Sigmoid colon (tissue), 7 donors: ENCODE measurements at regions of chr13 and their contacts with region 1.

Region 1: GRCh38 chr13:33204130-33204927 is 81.2 kb downstream of the STARD13 start:
- DNase-seq: peak; percentile 96
- H3K4me3 ChIP-seq: peak overlapping the region; percentile 36 to 58 (median 51)
- H3K27ac ChIP-seq: peak overlapping the region; percentile 83 to 88 (median 84)
- H3K4me1 ChIP-seq: peaks cover 0 to 82% (median 73%) of the 10 kb centered on the region in 4 donors
- H3K27me3 ChIP-seq: no peaks in the 10 kb centered on the region
- CTCF ChIP-seq: no peak
- EP300 ChIP-seq: peak in 3 of 4 donors; percentile 2 to 53 (median 44)
- POLR2A ChIP-seq: no peak

Region 2: GRCh38 chr13:32988608-32989289 is 215.6 kb before region 1 on chr13:
- intact Hi-C with region 1: no loop called
- DNase-seq: no peak
- H3K4me3 ChIP-seq: no peak overlapping the region
- H3K27ac ChIP-seq: no peak overlapping the region
- H3K4me1 ChIP-seq: peaks cover 0 to 7% (median 0%) of the 10 kb centered on the region in 4 donors
- H3K27me3 ChIP-seq: no peaks in the 10 kb centered on the region
- CTCF ChIP-seq: no peak
- EP300 ChIP-seq: no peak
- POLR2A ChIP-seq: no peak

Region 3: GRCh38 chr13:33110713-33111413 is 93.5 kb before region 1 on chr13:
- intact Hi-C with region 1: loop called (anchors 5 kb)
- DNase-seq: no peak
- H3K4me3 ChIP-seq: no peak overlapping the region
- H3K27ac ChIP-seq: peak overlapping the region; percentile 74 to 83 (median 79)
- H3K4me1 ChIP-seq: peaks cover 0 to 100% (median 96%) of the 10 kb centered on the region in 4 donors
- H3K27me3 ChIP-seq: no peaks in the 10 kb centered on the region
- CTCF ChIP-seq: no peak
- EP300 ChIP-seq: no peak
- POLR2A ChIP-seq: no peak

Region 4: GRCh38 chr13:33270895-33271538 is 66.7 kb after region 1 on chr13:
- intact Hi-C with region 1: loop called (anchors 5 kb)
- DNase-seq: no peak
- H3K4me3 ChIP-seq: no peak overlapping the region
- H3K27ac ChIP-seq: peak overlapping the region; percentile 71 to 78 (median 74)
- H3K4me1 ChIP-seq: peaks cover 0 to 93% (median 77%) of the 10 kb centered on the region in 4 donors
- H3K27me3 ChIP-seq: no peaks in the 10 kb centered on the region
- CTCF ChIP-seq: no peak
- EP300 ChIP-seq: no peak
- POLR2A ChIP-seq: no peak

Region 5: GRCh38 chr13:33409673-33410510 is 205.6 kb after region 1 on chr13:
- intact Hi-C with region 1: loop called (anchors 5 kb)
- DNase-seq: no peak
- H3K4me3 ChIP-seq: no peak overlapping the region
- H3K27ac ChIP-seq: peak overlapping the region; percentile 68 to 78 (median 74)
- H3K4me1 ChIP-seq: peaks cover 2 to 31% (median 26%) of the 10 kb centered on the region in 4 donors
- H3K27me3 ChIP-seq: no peaks in the 10 kb centered on the region
- CTCF ChIP-seq: no peak
- EP300 ChIP-seq: peak in 2 of 4 donors; percentile 81 to 88
- POLR2A ChIP-seq: no peak